Activated CD8-positive, alpha-beta T cell treated with anti-CD3 and anti-CD28 coated beads, Interleukin-2, amount 10 ng/mL, durations not matched to agents 7 days and 5 days (primary cell): ENCODE measurements at regions of chr22 and their contacts with region 1.

Region 1: DNA sequence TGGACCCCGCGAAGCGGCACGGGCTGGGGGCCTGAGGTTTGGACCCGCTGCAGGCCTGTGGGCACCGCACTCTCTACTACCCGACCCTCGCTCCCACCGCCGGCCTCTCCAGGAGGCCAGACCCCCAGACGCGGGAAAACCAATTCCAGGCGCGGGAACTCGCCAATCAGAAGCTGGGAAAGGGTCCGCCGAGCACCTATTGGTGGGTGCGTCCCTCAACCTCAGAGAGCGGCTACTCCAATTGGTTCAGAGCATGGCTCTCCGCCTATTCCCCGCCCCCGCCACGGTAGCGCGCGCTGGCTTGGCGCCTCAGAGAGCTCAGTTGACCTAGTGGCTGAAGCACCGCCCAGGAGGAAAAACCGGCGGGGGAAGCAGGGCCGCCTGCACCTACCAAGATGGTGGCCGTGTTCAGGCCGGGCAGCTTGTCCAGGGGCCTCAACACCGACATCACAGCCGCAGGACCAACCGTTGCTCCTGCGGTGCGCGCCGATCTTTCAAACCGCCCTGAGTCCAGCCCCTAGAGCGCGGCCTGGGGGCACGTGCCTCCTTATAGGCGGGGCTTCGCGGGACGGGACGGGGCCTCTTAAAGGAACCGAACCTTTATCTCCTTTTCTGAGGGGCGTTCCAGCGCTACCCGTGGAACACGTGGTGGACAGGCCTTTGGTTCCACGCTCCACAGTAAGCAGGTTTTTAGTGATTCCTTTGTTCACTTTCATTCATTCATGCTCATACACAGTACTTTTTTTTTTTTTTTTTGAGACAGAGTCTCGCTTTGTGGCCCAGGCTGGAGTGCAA is at the start of gene CENPM:
- DNase-seq: peak; percentile 96
- ATAC-seq: peak; percentile 98
- H3K4me3 Mint-ChIP-seq: peak within 1 kb of the TSS; percentile 81
- H3K27ac Mint-ChIP-seq: peak within 1 kb of the TSS; percentile 95
- H3K4me1 Mint-ChIP-seq: peaks cover 41% of the 10 kb centered on the region
- H3K27me3 Mint-ChIP-seq: no peaks in the 10 kb centered on the region
- total RNA-seq, gene CENPM: 83.6 to 83.8 TPM

Region 2: DNA sequence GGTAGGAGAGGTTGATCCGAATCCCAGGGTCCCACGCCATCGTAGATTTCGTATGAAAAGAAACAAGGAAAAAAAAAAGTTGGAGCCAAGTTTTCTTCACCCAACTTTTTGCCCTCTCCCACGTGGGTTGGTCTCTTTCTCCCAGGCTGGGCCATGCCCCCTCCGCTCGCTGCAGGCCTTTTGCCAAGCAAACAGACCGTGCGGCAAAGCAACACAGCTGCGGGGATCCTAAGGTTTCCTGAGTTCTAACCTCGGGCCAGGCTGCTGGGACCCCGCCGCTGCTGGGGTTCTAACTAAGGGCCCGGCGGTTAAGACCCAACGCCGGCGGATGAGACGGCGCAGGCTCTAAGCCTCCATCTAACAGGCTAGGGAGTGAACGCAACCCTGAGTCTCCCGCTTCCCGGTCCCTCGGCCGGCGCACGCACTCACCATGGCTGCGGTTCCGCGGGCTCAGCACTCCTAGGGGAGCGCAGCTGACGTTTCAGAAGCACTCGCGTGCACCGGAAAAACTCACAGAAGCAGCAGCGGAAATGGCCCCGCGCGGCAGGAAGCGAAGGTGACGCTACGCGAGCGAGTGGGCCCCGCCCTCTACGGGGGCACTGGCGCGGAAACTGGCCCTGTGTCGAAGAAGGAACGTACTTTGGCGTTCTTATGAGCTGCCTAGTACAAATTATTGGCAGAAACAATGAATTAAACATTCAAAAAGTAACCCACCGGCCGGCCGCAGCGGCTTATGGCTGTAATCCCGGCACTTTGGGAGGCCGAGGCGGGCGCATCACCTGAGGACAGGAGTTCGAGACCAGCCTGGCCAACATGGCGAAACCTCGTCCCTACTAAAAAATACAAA is 258.2 kb before region 1 on chr22 and contains the start of gene SNU13:
- CTCF ChIA-PET with region 1: interaction called, 16 read pairs
- POLR2A ChIA-PET with region 1: interaction called, 13 read pairs
- DNase-seq: peak; percentile 96
- ATAC-seq: peak; percentile 94
- H3K4me3 Mint-ChIP-seq: peak within 1 kb of the TSS; percentile 88
- H3K27ac Mint-ChIP-seq: peak within 1 kb of the TSS; percentile 99
- H3K4me1 Mint-ChIP-seq: peaks cover 34% of the 10 kb centered on the region
- H3K27me3 Mint-ChIP-seq: no peaks in the 10 kb centered on the region
- total RNA-seq, gene SNU13: 185 to 200 TPM

Region 3: DNA sequence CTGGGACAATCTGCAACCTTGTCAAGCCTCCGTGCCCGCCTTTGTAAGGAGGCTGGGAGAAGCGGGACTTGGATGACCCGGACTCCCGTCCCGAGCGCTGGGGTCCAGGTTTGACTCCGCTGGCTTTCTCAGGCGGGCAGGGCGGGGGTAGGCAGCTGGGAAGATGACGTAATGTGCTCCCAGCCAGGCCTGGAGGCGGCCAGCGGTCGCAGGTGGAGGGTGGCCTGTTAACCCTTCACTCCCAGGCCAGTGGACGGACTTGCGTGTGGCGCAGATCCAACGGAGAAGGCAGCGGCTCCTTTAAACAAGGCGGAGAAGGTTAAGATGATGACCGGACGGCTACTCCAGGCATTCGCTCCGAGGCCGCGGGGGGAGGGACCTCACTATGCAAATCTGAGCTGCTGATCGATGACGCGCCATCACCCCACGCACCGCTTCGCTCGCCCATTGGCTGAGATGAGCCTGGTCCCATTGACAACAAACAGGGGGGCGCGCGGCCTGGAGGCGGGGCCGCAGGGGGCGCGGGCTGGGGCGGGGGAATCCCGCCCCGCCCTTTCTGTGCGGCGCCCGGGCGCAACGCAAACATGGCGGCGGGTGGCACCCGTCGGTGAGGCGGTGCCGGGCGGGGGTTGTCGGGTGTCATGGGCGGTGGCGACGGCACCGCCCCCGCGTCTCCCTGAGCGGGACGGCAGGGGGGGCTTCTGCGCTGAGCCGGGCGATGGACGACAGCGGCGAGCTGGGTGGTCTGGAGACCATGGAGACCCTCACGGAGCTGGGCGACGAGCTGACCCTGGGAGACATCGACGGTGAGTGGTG is 114.1 kb before region 1 on chr22 and contains the start of gene SREBF2:
- CTCF ChIA-PET with region 1: interaction called, 8 read pairs
- POLR2A ChIA-PET with region 1: interaction called, 12 read pairs
- DNase-seq: peak; percentile 100
- ATAC-seq: peak; percentile 95
- H3K4me3 Mint-ChIP-seq: peak within 1 kb of the TSS; percentile 95
- H3K27ac Mint-ChIP-seq: peak within 1 kb of the TSS; percentile 100
- H3K4me1 Mint-ChIP-seq: peaks cover 41% of the 10 kb centered on the region
- H3K27me3 Mint-ChIP-seq: no peaks in the 10 kb centered on the region
- total RNA-seq, gene SREBF2: 93.0 to 93.7 TPM

Region 4: GRCh38 chr22:41976401-41976901 is 29.6 kb after region 1 on chr22:
- CTCF ChIA-PET with region 1: no interaction called
- POLR2A ChIA-PET with region 1: no interaction called
- DNase-seq: peak; percentile 38
- ATAC-seq: peak; percentile 74
- H3K4me3 Mint-ChIP-seq: peak overlapping the region; percentile 47
- H3K27ac Mint-ChIP-seq: no peak overlapping the region
- H3K4me1 Mint-ChIP-seq: peaks cover 5% of the 10 kb centered on the region
- H3K27me3 Mint-ChIP-seq: peaks cover 56% of the 10 kb centered on the region